Activated T-helper 1 cell treated with anti-CD3 and anti-CD28 coated beads, Interleukin-12 subunit alpha, Interleukin-12 subunit beta, Interleukin-2, Interleukin-4 antibody, amounts not matched to agents 30 ng/mL and 10 ng/mL and 1 ng/mL, durations not matched to agents 14 hours and 24 hours and 36 hours (primary cell): ENCODE measurements at regions of chr1 and their contacts with region 1.

Region 1: GRCh38 chr1:37553927-37554808 is at the start of gene SNIP1:
- DNase-seq: peak; percentile 89
- H3K4me3 Mint-ChIP-seq: peak within 1 kb of the TSS; percentile 98
- H3K27ac Mint-ChIP-seq: peak within 1 kb of the TSS; percentile 98
- H3K4me1 Mint-ChIP-seq: peaks cover 49% of the 10 kb centered on the region
- H3K27me3 Mint-ChIP-seq: no peaks in the 10 kb centered on the region
- total RNA-seq, gene SNIP1: 28.1 and 30.2 TPM in 2 replicates

Region 2: GRCh38 chr1:37465593-37466517 is 88.3 kb before region 1 on chr1:
- intact Hi-C with region 1: no loop called
- DNase-seq: no peak
- H3K4me3 Mint-ChIP-seq: no peak overlapping the region
- H3K27ac Mint-ChIP-seq: no peak overlapping the region
- H3K4me1 Mint-ChIP-seq: peaks cover 12% of the 10 kb centered on the region
- H3K27me3 Mint-ChIP-seq: no peaks in the 10 kb centered on the region

Region 3: GRCh38 chr1:37574834-37575480 is 20.8 kb after region 1 on chr1:
- intact Hi-C with region 1: loop called (anchors 1 kb)
- DNase-seq: no peak
- H3K4me3 Mint-ChIP-seq: peak overlapping the region; percentile 58
- H3K27ac Mint-ChIP-seq: peak overlapping the region; percentile 89
- H3K4me1 Mint-ChIP-seq: peaks cover 65% of the 10 kb centered on the region
- H3K27me3 Mint-ChIP-seq: no peaks in the 10 kb centered on the region

Region 4: GRCh38 chr1:37811027-37811655 is 257.0 kb after region 1 on chr1:
- intact Hi-C with region 1: no loop called
- DNase-seq: peak; percentile 59
- H3K4me3 Mint-ChIP-seq: peak overlapping the region; percentile 22
- H3K27ac Mint-ChIP-seq: no peak overlapping the region
- H3K4me1 Mint-ChIP-seq: peaks cover 35% of the 10 kb centered on the region
- H3K27me3 Mint-ChIP-seq: no peaks in the 10 kb centered on the region